ENCODE measurements at regions of chr17 and their contacts with region 1.

Region 1: GRCh38 chr17:8614988-8615387 is 15.5 kb downstream of the MYH10 start:
- DNase-seq: no peak
- H3K4me3 ChIP-seq: no peak overlapping the region
- H3K4me3 Mint-ChIP-seq: no peak overlapping the region
- H3K27ac ChIP-seq: no peak overlapping the region
- H3K27ac Mint-ChIP-seq: no peak overlapping the region
- H3K4me1 ChIP-seq: no peaks in the 10 kb centered on the region
- H3K4me1 Mint-ChIP-seq: no peaks in the 10 kb centered on the region
- H3K27me3 ChIP-seq: no peaks in the 10 kb centered on the region
- H3K27me3 Mint-ChIP-seq: peaks cover 0 to 12% of the 10 kb centered on the region in 2 donors

Region 2: GRCh38 chr17:8630802-8631553 is 16.0 kb after region 1 on chr17:
- CTCF ChIA-PET with region 1: no interaction called
- POLR2A ChIA-PET with region 1: no interaction called
- intact Hi-C with region 1: loop called (anchors 1 kb)
- DNase-seq: peak; percentile 80 to 87 (median 82)
- H3K4me3 ChIP-seq: peak overlapping the region; percentile 42 to 72
- H3K4me3 Mint-ChIP-seq: peak overlapping the region; percentile 95 to 100 (median 98)
- H3K27ac ChIP-seq: peak overlapping the region; percentile 37
- H3K27ac Mint-ChIP-seq: peak overlapping the region; percentile 76 to 97 (median 86)
- H3K4me1 ChIP-seq: peaks cover 13% of the 10 kb centered on the region
- H3K4me1 Mint-ChIP-seq: peaks cover 4 to 20% (median 10%) of the 10 kb centered on the region in 4 donors
- H3K27me3 ChIP-seq: peaks cover 17% of the 10 kb centered on the region
- H3K27me3 Mint-ChIP-seq: peaks cover 28 to 38% of the 10 kb centered on the region in 2 donors

Region 3: GRCh38 chr17:8681170-8681949 is 66.4 kb after region 1 on chr17:
- CTCF ChIA-PET with region 1: no interaction called
- POLR2A ChIA-PET with region 1: no interaction called
- intact Hi-C with region 1: no loop called
- DNase-seq: no peak
- H3K4me3 ChIP-seq: no peak overlapping the region
- H3K4me3 Mint-ChIP-seq: no peak overlapping the region
- H3K27ac ChIP-seq: no peak overlapping the region
- H3K27ac Mint-ChIP-seq: no peak overlapping the region
- H3K4me1 ChIP-seq: no peaks in the 10 kb centered on the region
- H3K4me1 Mint-ChIP-seq: no peaks in the 10 kb centered on the region
- H3K27me3 ChIP-seq: no peaks in the 10 kb centered on the region
- H3K27me3 Mint-ChIP-seq: peaks cover 17 to 22% of the 10 kb centered on the region in 2 donors